Esophagus muscularis mucosa (tissue), 4 donors: ENCODE measurements at regions of chr7 and their contacts with region 1.

Region 1: DNA sequence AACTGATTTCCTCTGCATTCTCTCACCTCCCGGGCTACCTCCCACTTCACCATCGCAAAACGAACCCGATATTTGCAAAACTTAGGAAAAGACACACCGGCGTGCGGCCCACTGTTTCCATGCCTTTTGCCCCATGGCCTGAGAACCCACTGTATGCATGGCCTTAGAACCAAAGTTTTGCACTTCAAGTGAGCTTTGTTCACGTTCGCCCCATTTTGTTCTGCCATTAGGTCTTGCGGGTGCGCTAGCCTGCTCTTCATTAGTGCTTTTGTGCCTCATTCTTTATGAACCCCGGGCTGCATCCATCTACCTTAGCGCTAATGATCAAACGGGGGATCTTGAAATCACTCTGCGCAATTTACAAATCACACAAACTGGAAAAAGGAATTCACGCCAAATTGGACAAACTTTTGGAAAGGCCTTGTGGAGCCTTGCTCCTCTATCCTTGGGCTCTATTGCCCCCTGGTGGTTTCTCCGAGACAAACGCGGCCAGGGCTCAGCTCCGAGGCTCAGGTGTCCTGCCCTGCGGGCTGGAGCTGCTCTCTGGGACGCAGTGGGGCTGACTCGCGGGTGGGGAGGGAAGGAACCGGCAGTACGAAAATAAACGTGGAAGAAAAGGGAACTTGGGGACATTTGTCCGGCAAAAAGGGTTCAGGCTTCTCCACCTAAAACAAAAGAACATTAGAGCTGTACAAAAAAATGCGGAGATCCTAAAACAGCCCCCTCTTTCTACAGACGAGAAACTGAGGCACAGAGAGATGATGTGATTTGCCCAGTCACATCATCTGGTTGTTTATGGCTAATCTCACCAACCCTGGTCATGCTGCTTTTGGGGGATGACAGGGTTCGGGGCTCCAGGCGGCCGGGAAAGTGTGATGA is 300.4 kb upstream of the NFE2L3 start:
- DNase-seq: no peak
- H3K4me3 ChIP-seq: peak overlapping the region; percentile 37 to 48 (median 41)
- H3K27ac ChIP-seq: peak overlapping the region; percentile 84 to 87 (median 84)
- H3K4me1 ChIP-seq: peaks cover 26 to 89% (median 82%) of the 10 kb centered on the region in 4 donors
- H3K27me3 ChIP-seq: peaks cover 0 to 60% (median 16%) of the 10 kb centered on the region in 4 donors
- CTCF ChIP-seq: peak; percentile 86 to 90 (median 87)
- EP300 ChIP-seq: no peak
- POLR2A ChIP-seq: no peak

Region 2: GRCh38 chr7:25389489-25390106 is 462.0 kb before region 1 on chr7:
- intact Hi-C with region 1: loop called (anchors 1 kb)
- DNase-seq: peak; percentile 53
- H3K4me3 ChIP-seq: no peak overlapping the region
- H3K27ac ChIP-seq: peak overlapping the region in 1 of 4 donors; percentile 12
- H3K4me1 ChIP-seq: peaks cover 5 to 78% (median 68%) of the 10 kb centered on the region in 4 donors
- H3K27me3 ChIP-seq: no peaks in the 10 kb centered on the region
- CTCF ChIP-seq: peak; percentile 59 to 66 (median 62)
- EP300 ChIP-seq: no peak
- POLR2A ChIP-seq: no peak

Region 3: GRCh38 chr7:25669961-25670841 is 181.4 kb before region 1 on chr7:
- intact Hi-C with region 1: loop called (anchors 5 kb)
- DNase-seq: peak; percentile 93
- H3K4me3 ChIP-seq: no peak overlapping the region
- H3K27ac ChIP-seq: peak overlapping the region; percentile 68 to 79 (median 72)
- H3K4me1 ChIP-seq: peaks cover 11 to 56% (median 45%) of the 10 kb centered on the region in 4 donors
- H3K27me3 ChIP-seq: no peaks in the 10 kb centered on the region
- CTCF ChIP-seq: no peak
- EP300 ChIP-seq: peak; percentile 23
- POLR2A ChIP-seq: no peak

Region 4: GRCh38 chr7:25752967-25753791 is 98.4 kb before region 1 on chr7:
- intact Hi-C with region 1: loop called (anchors 10 kb)
- DNase-seq: peak; percentile 80
- H3K4me3 ChIP-seq: no peak overlapping the region
- H3K27ac ChIP-seq: peak overlapping the region; percentile 77 to 87 (median 80)
- H3K4me1 ChIP-seq: peaks cover 10 to 75% (median 70%) of the 10 kb centered on the region in 4 donors
- H3K27me3 ChIP-seq: no peaks in the 10 kb centered on the region
- CTCF ChIP-seq: no peak
- EP300 ChIP-seq: no peak
- POLR2A ChIP-seq: no peak

Region 5: GRCh38 chr7:26864309-26865093 is 1012.9 kb after region 1 on chr7 and contains the start of gene SKAP2:
- intact Hi-C with region 1: loop called (anchors 5 kb)
- DNase-seq: peak; percentile 100
- H3K4me3 ChIP-seq: peak within 1 kb of the TSS; percentile 68 to 89 (median 81)
- H3K27ac ChIP-seq: peak within 1 kb of the TSS; percentile 93 to 97 (median 96)
- H3K4me1 ChIP-seq: peaks cover 5 to 38% (median 31%) of the 10 kb centered on the region in 4 donors
- H3K27me3 ChIP-seq: peaks cover 0 to 4% (median 0%) of the 10 kb centered on the region in 4 donors
- CTCF ChIP-seq: peak in 1 of 3 experiments; percentile 8
- EP300 ChIP-seq: no peak
- POLR2A ChIP-seq: peak; percentile 79
- total RNA-seq, gene SKAP2: 44.2 to 47.1 (median 45.1) TPM